ENCODE measurements at regions of chr2 and their contacts with region 1.

Region 1: GRCh38 chr2:219160186-219161017 is at the start of gene NHEJ1:
- DNase-seq: peak; percentile 89
- H3K4me3 Mint-ChIP-seq: peak within 1 kb of the TSS; percentile 90
- H3K27ac Mint-ChIP-seq: peak within 1 kb of the TSS; percentile 99
- H3K4me1 Mint-ChIP-seq: peaks cover 20% of the 10 kb centered on the region
- H3K27me3 Mint-ChIP-seq: no peaks in the 10 kb centered on the region
- total RNA-seq, gene NHEJ1: 18.1 and 20.7 TPM in 2 replicates

Region 2: DNA sequence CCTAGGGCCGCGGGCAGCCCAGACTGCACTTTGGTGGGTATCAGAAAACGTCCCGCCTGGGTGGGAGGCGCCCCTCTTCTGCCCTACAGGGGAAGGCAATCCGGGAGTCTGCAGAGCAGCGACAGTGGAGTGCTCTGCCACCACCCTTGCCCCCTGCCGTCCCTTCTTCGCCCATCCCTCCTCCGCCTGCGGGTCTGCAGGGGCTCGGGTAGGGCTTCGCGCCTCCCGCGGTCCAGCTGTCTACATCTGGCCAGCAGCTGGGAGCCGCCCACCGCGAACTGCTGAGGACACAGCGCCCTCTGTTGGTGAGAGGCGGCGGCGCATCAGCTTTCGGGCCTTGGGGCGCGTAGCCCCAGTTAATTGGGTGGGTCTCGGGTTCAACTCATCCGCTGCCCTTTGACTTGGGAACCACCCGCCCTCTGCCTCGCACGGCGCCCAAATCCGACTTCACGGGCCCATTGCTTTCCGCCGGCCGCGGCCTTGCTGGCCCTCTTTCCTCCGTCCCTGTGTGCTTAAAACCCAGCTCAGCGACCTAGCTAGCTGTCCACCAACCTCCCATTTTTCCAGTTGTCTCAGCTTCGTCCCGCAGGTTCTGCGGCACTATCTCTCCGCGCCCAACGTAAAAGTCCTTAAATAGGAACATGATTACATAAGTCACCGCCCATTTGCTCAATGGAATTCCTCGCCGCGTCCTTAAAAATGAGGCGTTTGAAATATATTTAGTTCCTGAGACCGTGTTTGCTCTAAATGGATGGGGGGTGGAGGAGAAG is 262.1 kb before region 1 on chr2:
- intact Hi-C with region 1: loop called (anchors 1 kb)
- DNase-seq: peak; percentile 71
- H3K4me3 Mint-ChIP-seq: peak overlapping the region; percentile 73
- H3K27ac Mint-ChIP-seq: peak overlapping the region; percentile 86
- H3K4me1 Mint-ChIP-seq: peaks cover 42% of the 10 kb centered on the region
- H3K27me3 Mint-ChIP-seq: peaks cover 56% of the 10 kb centered on the region

Region 3: DNA sequence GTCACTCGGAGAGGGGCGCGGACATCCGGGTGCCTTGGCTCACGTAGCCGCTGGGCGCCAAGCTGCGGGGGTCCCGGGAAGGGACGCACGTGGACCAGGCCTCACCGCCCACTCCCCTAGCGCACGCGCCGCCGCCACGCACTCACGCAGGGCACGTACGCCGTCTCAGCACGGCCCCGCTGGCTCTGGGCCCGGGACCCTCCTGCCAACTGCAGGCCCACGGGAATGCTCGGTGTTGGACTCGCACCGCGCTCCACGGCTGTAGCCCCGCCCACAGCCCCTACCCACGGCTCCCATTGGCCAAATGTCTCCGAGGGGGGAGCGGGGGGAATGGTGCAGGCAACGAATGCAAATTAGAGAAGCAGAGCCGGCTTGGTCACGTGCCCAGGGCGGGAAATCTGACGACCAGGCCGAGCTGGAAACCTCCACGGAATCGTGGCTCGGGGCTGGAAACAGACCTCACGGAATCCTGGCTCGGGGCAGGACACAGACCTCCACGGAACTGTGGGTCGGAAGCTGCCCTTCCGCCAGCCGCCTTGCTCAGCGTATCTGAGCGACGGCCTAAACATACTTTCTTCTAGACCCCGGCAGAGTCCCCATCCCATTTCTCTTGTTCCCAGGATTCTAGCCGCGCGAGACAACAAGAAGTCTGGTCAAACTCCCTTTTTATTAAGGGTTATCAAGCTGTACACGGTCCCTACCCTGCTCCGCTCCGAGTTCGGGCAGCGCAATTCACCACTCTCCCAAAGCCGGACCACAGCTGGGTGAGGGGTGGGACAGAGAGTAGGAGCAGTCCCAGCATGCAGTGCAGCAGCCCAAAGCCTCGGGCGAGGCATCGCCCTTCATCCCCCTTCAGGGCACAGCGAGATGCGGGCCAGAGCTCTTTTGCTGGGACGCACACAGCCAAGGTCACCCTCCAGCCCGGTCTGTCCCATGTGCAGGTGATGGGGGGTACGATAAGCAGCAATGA is 58.6 kb after region 1 on chr2 and contains the start of gene ABCB6:
- intact Hi-C with region 1: loop called (anchors 1 kb)
- DNase-seq: peak; percentile 86
- H3K4me3 Mint-ChIP-seq: peak within 1 kb of the TSS; percentile 87
- H3K27ac Mint-ChIP-seq: peak within 1 kb of the TSS; percentile 86
- H3K4me1 Mint-ChIP-seq: peaks cover 23% of the 10 kb centered on the region
- H3K27me3 Mint-ChIP-seq: no peaks in the 10 kb centered on the region
- total RNA-seq, gene ABCB6: 31.9 and 32.9 TPM in 2 replicates

Region 4: GRCh38 chr2:219253753-219254590 is 93.6 kb after region 1 on chr2 and contains the start of gene TUBA4A:
- intact Hi-C with region 1: loop called (anchors 1 kb)
- DNase-seq: peak; percentile 87
- H3K4me3 Mint-ChIP-seq: peak within 1 kb of the TSS; percentile 93
- H3K27ac Mint-ChIP-seq: peak within 1 kb of the TSS; percentile 98
- H3K4me1 Mint-ChIP-seq: peaks cover 50% of the 10 kb centered on the region
- H3K27me3 Mint-ChIP-seq: no peaks in the 10 kb centered on the region
- total RNA-seq, gene TUBA4A: 211 and 217 TPM in 2 replicates

Region 5: DNA sequence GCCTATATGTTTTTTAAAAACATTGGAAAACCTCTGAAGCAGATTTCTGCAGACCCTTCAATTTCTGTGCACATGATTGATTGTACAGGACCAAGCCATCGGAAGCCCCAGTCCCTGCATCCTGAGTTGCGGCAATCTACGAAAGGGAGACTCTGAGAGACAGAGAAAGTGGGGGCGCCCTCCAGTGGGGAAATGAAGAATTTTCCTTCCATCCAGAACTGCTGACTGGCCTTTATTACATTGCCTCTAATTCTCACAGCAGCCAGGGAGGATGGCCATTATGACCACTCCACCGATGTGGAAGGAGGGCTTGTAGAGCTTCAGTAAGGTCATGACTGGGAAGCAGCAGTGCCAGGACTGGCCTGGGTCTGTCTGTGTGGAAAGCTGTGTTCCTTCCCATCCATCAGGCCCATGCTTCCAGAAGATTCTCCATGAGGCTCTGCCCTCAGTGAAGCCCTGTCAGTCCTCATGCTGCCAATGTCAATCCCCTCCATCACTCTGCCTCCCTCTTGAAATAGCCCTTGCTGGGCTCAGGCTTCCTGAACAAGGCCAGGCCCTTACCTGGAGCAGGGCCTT is 192.1 kb after region 1 on chr2:
- intact Hi-C with region 1: loop called (anchors 1 kb)
- DNase-seq: peak; percentile 30
- H3K4me3 Mint-ChIP-seq: no peak overlapping the region
- H3K27ac Mint-ChIP-seq: no peak overlapping the region
- H3K4me1 Mint-ChIP-seq: no peaks in the 10 kb centered on the region
- H3K27me3 Mint-ChIP-seq: peaks cover 37% of the 10 kb centered on the region

Region 6: GRCh38 chr2:219597552-219598307 is 437.3 kb after region 1 on chr2 and contains the start of gene STK11IP:
- intact Hi-C with region 1: loop called (anchors 1 kb)
- DNase-seq: peak; percentile 89
- H3K4me3 Mint-ChIP-seq: peak within 1 kb of the TSS; percentile 90
- H3K27ac Mint-ChIP-seq: peak within 1 kb of the TSS; percentile 96
- H3K4me1 Mint-ChIP-seq: peaks cover 26% of the 10 kb centered on the region
- H3K27me3 Mint-ChIP-seq: peaks cover 2% of the 10 kb centered on the region
- total RNA-seq, gene STK11IP: 38.0 and 38.9 TPM in 2 replicates

Measured in activated T-helper 1 cell treated with anti-CD3 and anti-CD28 coated beads, Interleukin-12 subunit alpha, Interleukin-12 subunit beta, Interleukin-2, Interleukin-4 antibody, amounts not matched to agents 30 ng/mL and 10 ng/mL and 1 ng/mL, durations not matched to agents 14 hours and 24 hours and 36 hours (primary cell).